ENCODE measurements at regions of chr10 and their contacts with region 1.

Region 1: DNA sequence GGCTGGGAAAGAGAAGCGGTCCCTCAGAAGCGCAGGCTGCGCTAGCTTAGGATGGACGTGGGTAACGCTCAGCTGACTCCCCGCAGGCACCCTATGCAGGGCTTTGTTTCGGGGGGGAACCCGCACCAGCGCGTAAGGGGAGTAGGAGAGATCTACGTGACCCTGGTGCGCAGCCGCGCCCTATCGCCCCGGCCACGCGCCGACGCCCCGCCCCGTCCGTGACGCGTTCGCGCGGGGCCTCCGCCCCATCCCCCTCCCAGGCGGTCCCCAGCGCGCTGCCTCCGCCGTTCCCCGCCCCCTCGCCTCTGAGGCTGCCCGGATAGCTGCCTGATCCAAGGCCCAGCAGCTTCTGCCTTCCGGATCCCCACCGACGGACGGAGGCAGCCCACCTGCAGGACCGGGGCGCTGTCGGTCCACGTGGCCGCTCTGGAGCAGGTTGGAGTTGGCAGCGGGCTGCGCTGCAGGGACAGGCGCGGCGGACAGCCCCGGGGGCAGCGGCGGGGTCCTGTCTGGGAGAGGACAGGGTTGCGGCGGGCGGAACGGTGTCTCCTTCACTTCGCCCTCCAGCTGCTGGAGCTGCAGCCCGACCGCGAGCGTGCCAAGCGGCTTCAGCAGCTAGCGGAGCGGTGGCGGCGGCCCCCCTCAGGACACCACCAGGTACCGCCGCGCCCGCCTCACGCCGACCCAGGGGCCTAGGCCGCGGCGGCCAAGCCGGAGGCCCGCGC is at the start of gene VDAC2:
- DNase-seq: peak; percentile 99
- ATAC-seq: peak; percentile 84
- H3K4me3 Mint-ChIP-seq: peak within 1 kb of the TSS; percentile 100
- H3K27ac Mint-ChIP-seq: peak within 1 kb of the TSS; percentile 100
- H3K4me1 Mint-ChIP-seq: peaks cover 34% of the 10 kb centered on the region
- H3K27me3 Mint-ChIP-seq: no peaks in the 10 kb centered on the region
- total RNA-seq, gene VDAC2: 123 to 125 TPM

Region 2: GRCh38 chr10:75111367-75111906 is 99.0 kb before region 1 on chr10 and contains the start of gene SAMD8:
- POLR2A ChIA-PET with region 1: interaction called, 27 read pairs
- DNase-seq: peak; percentile 97
- ATAC-seq: peak; percentile 87
- H3K4me3 Mint-ChIP-seq: peak within 1 kb of the TSS; percentile 89
- H3K27ac Mint-ChIP-seq: peak within 1 kb of the TSS; percentile 91
- H3K4me1 Mint-ChIP-seq: peaks cover 43% of the 10 kb centered on the region
- H3K27me3 Mint-ChIP-seq: peaks cover 3% of the 10 kb centered on the region
- total RNA-seq, gene SAMD8: 21.0 to 22.7 TPM

Region 3: DNA sequence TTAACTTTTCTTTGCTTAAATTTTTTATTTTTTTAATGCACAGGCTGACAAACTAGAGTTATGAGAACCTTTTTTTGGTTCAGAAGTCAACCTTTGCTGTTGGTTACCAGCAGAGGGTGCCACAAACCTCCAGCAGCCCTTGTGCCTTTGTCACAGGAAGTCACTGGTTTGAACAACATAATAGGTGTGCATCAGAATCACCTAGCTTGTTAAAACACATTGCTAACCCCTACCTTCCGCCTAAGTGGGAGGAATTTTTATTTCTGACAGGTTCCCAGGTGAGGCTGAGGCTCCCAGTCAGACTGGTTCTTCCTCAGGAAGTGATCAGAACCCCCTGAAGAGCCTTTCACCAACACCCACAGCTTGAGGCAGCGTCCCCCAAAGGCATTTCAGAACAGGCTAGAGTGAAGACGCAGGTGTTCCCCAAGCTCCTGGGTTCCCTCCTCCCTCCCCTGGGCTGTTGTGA is 22.4 kb before region 1 on chr10:
- POLR2A ChIA-PET with region 1: interaction called, 28 read pairs
- DNase-seq: peak; percentile 54
- ATAC-seq: peak; percentile 96
- H3K4me3 Mint-ChIP-seq: peak overlapping the region; percentile 48
- H3K27ac Mint-ChIP-seq: peak overlapping the region; percentile 88
- H3K4me1 Mint-ChIP-seq: peaks cover 16% of the 10 kb centered on the region
- H3K27me3 Mint-ChIP-seq: no peaks in the 10 kb centered on the region

Region 4: DNA sequence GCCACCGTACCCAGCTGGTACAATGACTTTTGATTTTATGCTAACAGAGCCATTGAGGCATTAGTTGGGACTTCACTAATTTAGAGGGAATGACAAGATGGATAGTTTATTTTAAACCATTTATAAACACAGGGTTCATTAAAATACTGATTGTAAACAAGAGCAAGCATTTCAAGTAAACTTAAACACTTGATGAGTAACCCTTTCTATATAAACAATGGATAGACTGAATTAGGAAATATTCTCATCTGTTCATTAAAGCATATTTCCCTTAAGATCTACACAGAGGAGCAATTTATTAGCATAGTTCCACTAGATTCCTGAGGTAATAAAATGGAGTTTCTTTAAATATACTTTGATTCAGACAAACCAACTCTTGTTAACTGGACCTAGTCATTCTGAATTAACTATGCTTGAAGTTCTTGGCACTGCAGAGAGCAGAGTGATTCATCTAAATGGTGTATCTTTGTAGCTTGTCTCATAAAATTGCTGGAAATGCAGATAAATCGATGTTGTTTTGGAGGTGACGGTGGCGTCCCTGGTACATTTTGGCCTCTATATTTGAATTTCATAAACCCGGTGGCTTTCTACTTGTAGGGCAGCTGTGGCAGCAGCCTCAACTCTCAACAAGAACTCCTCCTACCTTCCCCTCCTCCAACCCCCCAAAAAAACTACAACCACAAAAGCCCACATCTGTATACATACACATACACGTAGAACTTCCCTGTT is 15.2 kb before region 1 on chr10:
- POLR2A ChIA-PET with region 1: interaction called, 20 read pairs
- DNase-seq: no peak
- ATAC-seq: no peak
- H3K4me3 Mint-ChIP-seq: no peak overlapping the region
- H3K27ac Mint-ChIP-seq: no peak overlapping the region
- H3K4me1 Mint-ChIP-seq: peaks cover 1% of the 10 kb centered on the region
- H3K27me3 Mint-ChIP-seq: no peaks in the 10 kb centered on the region

Region 5: DNA sequence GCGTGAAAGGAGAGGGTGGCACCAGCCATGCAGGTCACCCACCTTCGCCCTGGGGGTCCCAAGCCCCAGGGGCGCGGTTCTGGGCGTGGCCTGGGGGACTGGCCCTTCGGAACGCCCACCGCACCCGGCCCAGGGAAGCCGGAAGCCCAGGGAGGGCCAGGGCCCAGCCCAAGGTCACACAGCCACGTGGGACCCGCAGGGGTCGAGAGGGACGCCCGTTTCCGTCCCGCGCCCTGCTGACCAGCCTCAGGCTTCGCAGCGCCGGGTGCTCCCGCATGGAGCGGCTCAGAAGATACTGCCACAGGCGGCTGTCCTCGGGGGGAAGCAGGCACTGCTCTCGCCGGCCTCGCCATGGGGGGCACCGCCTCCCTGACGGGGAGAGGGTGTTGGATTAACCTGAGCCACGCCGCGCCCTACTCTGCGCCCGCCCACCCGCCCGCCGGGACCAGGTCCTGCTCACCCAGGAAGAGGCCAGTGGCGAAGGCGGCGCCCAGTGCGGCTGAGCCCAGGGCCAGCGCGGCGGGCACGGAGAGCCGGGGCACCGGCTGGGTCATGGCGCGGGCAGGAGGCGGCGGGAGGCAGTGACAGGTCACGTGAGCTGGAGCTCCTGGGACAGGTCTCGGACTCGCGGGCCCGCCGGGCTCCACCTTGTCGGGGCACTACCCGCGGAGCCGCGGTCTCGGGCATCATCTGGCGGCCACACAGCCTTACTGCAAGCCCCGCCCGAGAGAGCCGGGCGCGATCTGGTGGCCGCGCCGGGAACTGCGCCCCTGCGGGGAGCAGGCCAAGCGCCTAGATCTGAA is 25.1 kb after region 1 on chr10 and contains the start of gene COMTD1:
- POLR2A ChIA-PET with region 1: interaction called, 97 read pairs
- DNase-seq: peak; percentile 99
- ATAC-seq: peak; percentile 71
- H3K4me3 Mint-ChIP-seq: peak within 1 kb of the TSS; percentile 87
- H3K27ac Mint-ChIP-seq: peak within 1 kb of the TSS; percentile 94
- H3K4me1 Mint-ChIP-seq: peaks cover 20% of the 10 kb centered on the region
- H3K27me3 Mint-ChIP-seq: no peaks in the 10 kb centered on the region
- total RNA-seq, gene COMTD1: 40.8 to 42.3 TPM